ENCODE measurements at regions of chr2 and their contacts with region 1.

Region 1: DNA sequence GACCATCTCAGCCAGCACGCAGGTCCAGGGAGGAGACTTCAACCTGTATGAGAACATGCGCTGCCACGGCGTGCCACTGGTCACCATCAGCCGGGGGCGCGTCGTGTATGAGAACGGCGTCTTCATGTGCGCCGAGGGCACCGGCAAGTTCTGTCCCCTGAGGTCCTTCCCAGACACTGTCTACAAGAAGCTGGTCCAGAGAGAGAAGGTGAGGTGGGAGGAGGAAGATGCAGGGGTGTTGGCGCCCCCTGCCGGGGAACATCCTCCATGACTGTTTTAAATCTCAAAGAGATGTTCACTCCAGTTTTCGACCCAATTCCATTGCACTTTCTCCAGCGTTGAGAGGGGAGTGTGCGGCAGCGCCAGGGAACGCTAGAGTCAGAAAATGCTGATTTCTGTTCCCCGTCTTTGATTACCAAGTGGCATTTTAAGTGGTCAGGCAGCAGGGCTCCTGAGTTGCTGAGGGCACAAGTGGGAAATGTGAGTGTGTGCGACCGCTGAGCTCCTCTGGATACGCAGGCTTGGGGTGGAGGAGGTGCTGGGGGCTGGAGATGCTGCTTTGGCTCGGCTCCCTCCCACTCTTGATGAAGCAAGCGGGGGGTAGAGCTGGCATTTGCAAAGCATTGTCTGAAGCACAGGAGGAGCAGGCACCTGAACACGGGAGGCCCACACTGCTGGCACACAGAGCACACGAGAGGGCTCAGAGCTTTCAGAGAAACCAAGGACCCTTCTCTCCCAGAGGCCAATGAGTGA is 27.7 kb upstream of the MAPRE3 start:
- DNase-seq: peak; percentile 87
- ATAC-seq: peak; percentile 78
- H3K4me3 Mint-ChIP-seq: peak overlapping the region; percentile 86
- H3K27ac Mint-ChIP-seq: no peak overlapping the region
- H3K4me1 Mint-ChIP-seq: peaks cover 16% of the 10 kb centered on the region
- H3K27me3 Mint-ChIP-seq: peaks cover 29% of the 10 kb centered on the region
- CTCF ChIP-seq: peak; percentile 96

Region 2: DNA sequence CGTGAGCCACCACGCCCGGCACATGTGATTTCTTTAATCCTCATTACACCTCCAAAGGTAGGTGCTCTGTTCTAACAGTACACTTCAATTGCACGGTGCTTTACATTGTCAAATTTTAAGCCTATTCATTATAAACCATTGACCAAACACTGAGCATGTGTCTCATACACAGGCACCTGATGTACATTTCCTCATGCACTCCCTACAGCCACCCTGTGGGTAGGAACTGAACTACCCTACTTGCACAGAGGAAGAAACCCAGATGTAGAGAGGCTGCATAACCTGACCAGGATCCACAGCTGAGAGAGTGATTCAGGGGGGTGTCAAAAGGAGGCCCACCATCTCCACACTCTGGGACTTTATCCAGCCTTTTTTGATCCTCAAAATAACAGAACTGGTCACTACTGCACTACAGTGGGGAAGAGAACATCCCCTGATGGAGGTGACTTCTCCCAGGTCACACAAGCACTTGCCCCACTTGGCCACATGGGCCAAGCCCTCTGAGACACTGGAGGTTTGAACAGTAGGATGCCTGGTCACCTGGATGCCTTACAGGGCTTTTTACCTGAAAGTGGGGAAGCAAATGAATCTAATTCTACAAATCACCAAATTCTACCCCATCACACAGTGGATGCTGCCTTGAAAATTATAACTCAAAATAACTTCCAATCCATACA is 101.6 kb before region 1 on chr2:
- CTCF ChIA-PET with region 1: interaction called, 315 read pairs
- POLR2A ChIA-PET with region 1: interaction called, 7 read pairs
- DNase-seq: no peak
- ATAC-seq: peak; percentile 57
- H3K4me3 Mint-ChIP-seq: no peak overlapping the region
- H3K27ac Mint-ChIP-seq: no peak overlapping the region
- H3K4me1 Mint-ChIP-seq: 0 out of 2 replicates have a peak, but pooled peaks cover 2% of the 10 kb centered on the region
- H3K27me3 Mint-ChIP-seq: peaks cover 49% of the 10 kb centered on the region
- CTCF ChIP-seq: no peak

Region 3: GRCh38 chr2:26883956-26884355 is 58.8 kb before region 1 on chr2:
- CTCF ChIA-PET with region 1: interaction called, 16 read pairs
- POLR2A ChIA-PET with region 1: no interaction called
- DNase-seq: no peak
- ATAC-seq: no peak; the same call in 1 of the 2 replicates
- H3K4me3 Mint-ChIP-seq: no peak overlapping the region
- H3K27ac Mint-ChIP-seq: no peak overlapping the region
- H3K4me1 Mint-ChIP-seq: peaks cover 6% of the 10 kb centered on the region
- H3K27me3 Mint-ChIP-seq: no peaks in the 10 kb centered on the region
- CTCF ChIP-seq: no peak

Region 4: DNA sequence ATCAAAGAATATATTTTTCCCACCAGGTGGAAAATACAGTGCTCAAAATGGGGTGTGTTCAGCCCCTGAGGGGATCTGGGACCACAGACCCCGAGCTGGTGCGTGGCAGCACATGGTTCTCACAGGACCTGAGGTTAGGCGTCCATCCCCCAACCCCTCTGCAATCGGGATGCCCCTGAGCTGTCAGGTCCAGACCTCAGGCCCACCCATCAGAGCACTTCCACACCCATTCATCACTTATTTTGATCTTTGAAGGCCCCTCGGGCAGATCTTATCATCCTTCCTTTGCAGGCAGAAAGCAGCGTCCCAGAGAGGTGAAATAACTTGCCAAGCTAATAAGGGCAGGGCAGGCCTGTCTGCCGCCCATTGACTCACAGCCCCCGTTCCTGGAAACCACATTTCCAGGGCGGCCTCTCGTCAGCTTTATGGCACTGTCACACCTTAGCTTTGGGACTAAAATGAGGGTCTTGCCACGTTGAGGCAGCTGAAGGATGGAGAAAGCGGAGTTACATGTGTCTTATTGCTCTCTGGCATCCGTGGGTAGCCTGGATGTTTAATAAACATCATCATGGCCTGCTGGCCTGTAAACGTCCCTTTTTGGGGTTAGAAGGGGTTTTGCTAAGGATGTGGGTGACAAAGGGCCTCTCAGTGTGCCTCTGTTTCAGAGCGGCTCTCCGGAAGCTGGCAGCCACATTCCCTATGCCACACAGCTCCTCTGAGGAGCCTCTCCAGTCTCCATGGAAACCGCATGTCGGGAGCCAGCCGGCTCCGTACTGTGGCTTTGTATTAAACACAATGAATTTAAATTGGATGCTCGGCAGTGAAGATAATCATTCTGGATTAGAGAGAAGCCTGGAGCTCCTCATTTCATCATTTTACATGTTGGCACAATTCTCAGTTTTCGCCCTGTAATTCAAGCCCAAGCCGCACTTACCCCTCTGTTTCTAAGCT is 30.5 kb before region 1 on chr2:
- CTCF ChIA-PET with region 1: interaction called, 14 read pairs
- POLR2A ChIA-PET with region 1: no interaction called
- DNase-seq: peak; percentile 45
- ATAC-seq: peak; percentile 86
- H3K4me3 Mint-ChIP-seq: peak overlapping the region; percentile 33
- H3K27ac Mint-ChIP-seq: no peak overlapping the region
- H3K4me1 Mint-ChIP-seq: peaks cover 28% of the 10 kb centered on the region
- H3K27me3 Mint-ChIP-seq: peaks cover 3% of the 10 kb centered on the region; the same call in 1 of the 2 replicates
- CTCF ChIP-seq: no peak

Region 5: GRCh38 chr2:26970244-26970920 is 27.7 kb after region 1 on chr2 and contains the start of gene MAPRE3:
- CTCF ChIA-PET with region 1: interaction called, 13 read pairs
- POLR2A ChIA-PET with region 1: no interaction called
- DNase-seq: peak; percentile 97
- ATAC-seq: peak; percentile 90
- H3K4me3 Mint-ChIP-seq: peak within 1 kb of the TSS; percentile 93
- H3K27ac Mint-ChIP-seq: no peak within 1 kb of the TSS
- H3K4me1 Mint-ChIP-seq: peaks cover 29% of the 10 kb centered on the region
- H3K27me3 Mint-ChIP-seq: peaks cover 49% of the 10 kb centered on the region
- CTCF ChIP-seq: no peak
- total RNA-seq, gene MAPRE3: 4.9 to 10.3 TPM (median 6.0 TPM) in 3 replicates

Region 6: GRCh38 chr2:27032495-27033252 is 90.0 kb after region 1 on chr2 and contains the start of gene TMEM214:
- CTCF ChIA-PET with region 1: no interaction called
- POLR2A ChIA-PET with region 1: no interaction called
- DNase-seq: peak; percentile 82
- ATAC-seq: peak; percentile 94
- H3K4me3 Mint-ChIP-seq: peak within 1 kb of the TSS; percentile 95
- H3K27ac Mint-ChIP-seq: peak within 1 kb of the TSS; percentile 65
- H3K4me1 Mint-ChIP-seq: peaks cover 16% of the 10 kb centered on the region
- H3K27me3 Mint-ChIP-seq: no peaks in the 10 kb centered on the region
- CTCF ChIP-seq: no peak
- total RNA-seq, gene TMEM214: 46.4 to 57.1 TPM (median 48.9 TPM) in 3 replicates

Region 7: DNA sequence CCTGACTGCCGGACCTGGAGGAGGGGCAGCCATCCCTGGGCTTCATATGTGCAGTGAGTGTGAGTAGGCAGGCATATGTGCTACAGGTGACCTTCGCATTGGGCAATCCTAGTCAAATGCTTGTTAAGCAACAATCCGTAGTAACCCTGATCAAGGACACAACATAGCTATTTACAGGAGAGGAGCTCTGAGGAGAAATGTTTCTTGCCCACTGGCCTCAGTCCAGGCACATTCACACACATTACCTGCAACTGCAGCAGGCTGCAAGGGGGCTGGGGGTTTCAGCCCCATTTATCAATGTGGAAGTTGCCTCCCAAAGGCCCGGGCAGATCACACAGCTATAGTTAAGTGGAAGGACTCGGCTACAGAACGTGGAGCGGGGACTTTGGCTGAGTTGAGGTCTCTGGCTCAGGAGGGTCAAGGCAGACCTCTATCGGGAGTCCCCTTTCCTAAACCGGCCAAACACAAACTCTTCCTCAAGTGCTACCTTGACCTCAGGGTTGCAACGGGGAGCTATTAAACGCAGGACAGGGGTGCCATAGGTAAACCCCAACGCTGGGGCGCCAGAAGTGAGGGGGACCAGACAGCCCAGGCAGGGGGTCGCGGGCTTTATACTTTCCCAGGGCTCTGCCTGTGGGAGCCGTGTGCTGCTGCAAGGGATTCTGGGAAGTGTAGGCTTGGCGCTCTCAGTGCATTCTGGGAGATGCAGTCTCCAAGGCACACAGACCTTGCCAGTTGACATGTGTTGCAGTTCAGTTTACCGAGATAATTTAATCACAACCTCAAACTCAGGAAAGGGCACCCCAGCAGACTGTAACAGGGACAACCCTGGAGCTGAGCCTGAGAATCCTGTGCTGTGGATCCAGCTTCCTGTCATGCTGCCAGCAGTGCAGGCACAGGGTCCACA is 153.3 kb after region 1 on chr2:
- CTCF ChIA-PET with region 1: no interaction called
- POLR2A ChIA-PET with region 1: no interaction called
- DNase-seq: peak; percentile 59
- ATAC-seq: peak; percentile 87
- H3K4me3 Mint-ChIP-seq: peak overlapping the region; percentile 58
- H3K27ac Mint-ChIP-seq: peak overlapping the region; percentile 68; the same call in 1 of the 2 replicates
- H3K4me1 Mint-ChIP-seq: peaks cover 6% of the 10 kb centered on the region
- H3K27me3 Mint-ChIP-seq: no peaks in the 10 kb centered on the region
- CTCF ChIP-seq: no peak